ENCODE measurements at regions of chr11 and their contacts with region 1.

Region 1: DNA sequence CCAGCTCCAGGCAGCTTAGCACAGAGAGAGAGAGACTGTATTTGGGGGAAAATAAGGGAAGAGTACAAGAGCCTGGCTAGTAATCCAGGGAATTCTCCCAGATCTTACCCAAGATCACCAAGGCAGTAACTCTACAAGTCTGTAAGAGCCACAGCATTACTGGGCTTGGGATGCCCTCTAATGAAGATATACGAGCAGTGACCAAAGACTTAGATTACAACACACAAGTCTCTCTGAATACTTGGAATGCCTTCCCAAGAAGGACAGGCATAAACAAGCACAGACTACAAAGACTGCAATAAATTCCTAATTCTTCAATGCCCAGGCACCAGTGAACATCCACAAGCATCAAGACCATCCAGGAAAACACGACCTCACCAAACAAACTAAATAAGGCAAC is 17.7 kb downstream of the DNAJC24 start:
- DNase-seq: peak; percentile 41 to 60
- H3K4me3 ChIP-seq: no peak overlapping the region
- H3K4me3 Mint-ChIP-seq: no peak overlapping the region
- H3K27ac Mint-ChIP-seq: peak overlapping the region; percentile 63
- H3K4me1 ChIP-seq: peaks cover 11% of the 10 kb centered on the region
- H3K4me1 Mint-ChIP-seq: peaks cover 21% of the 10 kb centered on the region
- H3K27me3 ChIP-seq: no peaks in the 10 kb centered on the region
- H3K27me3 Mint-ChIP-seq: no peaks in the 10 kb centered on the region
- CTCF ChIP-seq: no peak

Region 2: GRCh38 chr11:30113326-30113873 is 1274.0 kb before region 1 on chr11:
- CTCF ChIA-PET with region 1: no interaction called
- POLR2A ChIA-PET with region 1: no interaction called
- intact Hi-C with region 1: no loop called
- DNase-seq: no peak
- H3K4me3 ChIP-seq: no peak overlapping the region
- H3K4me3 Mint-ChIP-seq: no peak overlapping the region
- H3K27ac Mint-ChIP-seq: no peak overlapping the region
- H3K4me1 ChIP-seq: no peaks in the 10 kb centered on the region
- H3K4me1 Mint-ChIP-seq: no peaks in the 10 kb centered on the region
- H3K27me3 ChIP-seq: no peaks in the 10 kb centered on the region
- H3K27me3 Mint-ChIP-seq: peaks cover 7% of the 10 kb centered on the region
- CTCF ChIP-seq: no peak

Region 3: GRCh38 chr11:31214372-31214771 is 173.0 kb before region 1 on chr11:
- CTCF ChIA-PET with region 1: no interaction called
- POLR2A ChIA-PET with region 1: no interaction called
- intact Hi-C with region 1: no loop called
- DNase-seq: no peak
- H3K4me3 ChIP-seq: no peak overlapping the region
- H3K4me3 Mint-ChIP-seq: no peak overlapping the region
- H3K27ac Mint-ChIP-seq: no peak overlapping the region
- H3K4me1 ChIP-seq: no peaks in the 10 kb centered on the region
- H3K4me1 Mint-ChIP-seq: no peaks in the 10 kb centered on the region
- H3K27me3 ChIP-seq: no peaks in the 10 kb centered on the region
- H3K27me3 Mint-ChIP-seq: peaks cover 4% of the 10 kb centered on the region
- CTCF ChIP-seq: no peak

Region 4: DNA sequence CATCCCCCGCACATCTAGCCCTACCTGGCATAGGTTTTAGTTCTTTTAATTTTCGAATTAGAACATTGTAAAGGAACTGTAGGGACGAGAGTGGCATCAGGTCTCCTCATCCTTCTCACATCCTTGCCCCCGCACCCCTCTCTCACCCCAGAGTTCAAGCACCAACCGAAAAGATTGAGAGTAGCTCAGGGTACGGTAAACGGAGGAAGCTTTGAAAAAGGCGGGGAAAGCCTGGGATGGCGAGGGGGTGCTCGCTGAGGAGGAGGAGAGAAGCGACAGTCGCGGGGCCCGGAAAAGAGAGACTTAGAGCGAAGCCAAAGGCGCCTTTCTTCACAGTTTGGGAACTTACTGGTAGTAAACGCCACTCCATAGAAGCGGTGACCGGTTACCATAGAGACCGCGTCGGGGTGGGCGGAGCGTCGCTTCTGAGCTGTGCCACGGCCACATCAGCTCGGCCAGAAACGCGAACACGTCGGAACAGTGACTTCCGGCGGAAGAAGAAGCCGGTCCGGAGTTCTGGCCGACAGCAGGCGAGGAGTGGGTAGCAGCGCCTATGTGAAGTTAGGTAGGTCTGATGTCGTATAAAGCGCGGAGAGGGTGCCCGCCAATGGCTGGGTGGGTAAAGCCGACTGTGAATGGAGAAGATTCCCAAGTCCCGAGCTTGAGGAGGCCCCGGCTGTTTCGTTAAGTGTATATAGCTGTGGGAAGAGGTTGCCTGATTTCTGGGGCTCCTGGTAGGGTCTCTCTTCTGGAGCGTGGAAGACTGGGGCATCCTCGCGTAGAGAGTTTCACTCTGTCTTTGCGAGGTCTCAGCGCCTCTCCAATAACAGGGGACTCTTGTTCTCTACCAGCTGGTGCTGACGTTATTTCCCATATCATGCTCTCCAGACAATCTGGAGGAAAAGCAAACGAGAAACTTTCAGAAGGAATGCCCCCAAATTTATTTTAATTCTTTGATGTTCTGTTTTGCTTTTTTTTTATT is 17.7 kb before region 1 on chr11 and contains the starts of genes DCDC1 and DNAJC24:
- CTCF ChIA-PET with region 1: no interaction called
- POLR2A ChIA-PET with region 1: no interaction called
- intact Hi-C with region 1: loop called (anchors 1 kb)
- DNase-seq: peak; percentile 91 to 92
- H3K4me3 ChIP-seq: peak within 1 kb of the TSS; percentile 79
- H3K4me3 Mint-ChIP-seq: peak within 1 kb of the TSS; percentile 91
- H3K27ac Mint-ChIP-seq: peak within 1 kb of the TSS; percentile 90
- H3K4me1 ChIP-seq: no peaks in the 10 kb centered on the region
- H3K4me1 Mint-ChIP-seq: no peaks in the 10 kb centered on the region
- H3K27me3 ChIP-seq: no peaks in the 10 kb centered on the region
- H3K27me3 Mint-ChIP-seq: peaks cover 8% of the 10 kb centered on the region
- CTCF ChIP-seq: no peak
- total RNA-seq, gene DCDC1: 0.19 TPM in 1 of 2 replicates, not detected in the other
- total RNA-seq, gene DNAJC24: 13.4 and 14.8 TPM in 2 replicates